Naive thymus-derived CD4-positive, alpha-beta T cell (primary cell): ENCODE measurements at regions of chr6 and their contacts with region 1.

Region 1: GRCh38 chr6:27312146-27312949 is at the start of gene POM121L2:
- DNase-seq: peak in 8 of 9 donors; percentile 26 to 61 (median 56)
- ATAC-seq: peak; percentile 66
- H3K4me3 ChIP-seq: peak within 1 kb of the TSS; percentile 80
- H3K4me3 Mint-ChIP-seq: peak within 1 kb of the TSS; percentile 76 to 86 (median 83)
- H3K27ac ChIP-seq: no peak within 1 kb of the TSS
- H3K27ac Mint-ChIP-seq: peak within 1 kb of the TSS in 2 of 9 donors; percentile 15 to 25
- H3K4me1 ChIP-seq: peaks cover 0 to 6% of the 10 kb centered on the region in 2 donors
- H3K4me1 Mint-ChIP-seq: peaks cover 0 to 13% (median 4%) of the 10 kb centered on the region in 7 donors
- H3K27me3 ChIP-seq: peaks cover 4 to 14% of the 10 kb centered on the region in 2 donors
- H3K27me3 Mint-ChIP-seq: peaks cover 63 to 81% (median 73%) of the 10 kb centered on the region in 5 donors
- total RNA-seq, gene POM121L2: not detected

Region 2: GRCh38 chr6:27126815-27127537 is 185.4 kb before region 1 on chr6:
- CTCF ChIA-PET with region 1: no interaction called
- POLR2A ChIA-PET with region 1: no interaction called
- intact Hi-C with region 1: loop called in 1 of 2 experiments (anchors 1 kb)
- DNase-seq: peak; percentile 46 to 82 (median 77)
- ATAC-seq: peak; percentile 89
- H3K4me3 ChIP-seq: peak overlapping the region; percentile 33
- H3K4me3 Mint-ChIP-seq: peak overlapping the region; percentile 35 to 90 (median 77)
- H3K27ac ChIP-seq: no peak overlapping the region
- H3K27ac Mint-ChIP-seq: peak overlapping the region; percentile 41 to 93 (median 82)
- H3K4me1 ChIP-seq: peaks cover 4 to 6% of the 10 kb centered on the region in 2 donors
- H3K4me1 Mint-ChIP-seq: peaks cover 6 to 51% (median 15%) of the 10 kb centered on the region in 7 donors
- H3K27me3 ChIP-seq: no peaks in the 10 kb centered on the region
- H3K27me3 Mint-ChIP-seq: no peaks in the 10 kb centered on the region

Region 3: GRCh38 chr6:27177485-27178406 is 134.6 kb before region 1 on chr6:
- CTCF ChIA-PET with region 1: interaction called, 3 read pairs
- POLR2A ChIA-PET with region 1: no interaction called
- intact Hi-C with region 1: loop called in 1 of 2 experiments (anchors 1 kb)
- DNase-seq: peak; percentile 49 to 78 (median 66)
- ATAC-seq: peak; percentile 83
- H3K4me3 ChIP-seq: peak overlapping the region; percentile 99
- H3K4me3 Mint-ChIP-seq: peak overlapping the region; percentile 90 to 98 (median 96)
- H3K27ac ChIP-seq: peak overlapping the region; percentile 74
- H3K27ac Mint-ChIP-seq: peak overlapping the region; percentile 79 to 100 (median 95)
- H3K4me1 ChIP-seq: peaks cover 0 to 3% of the 10 kb centered on the region in 2 donors
- H3K4me1 Mint-ChIP-seq: peaks cover 0 to 33% (median 14%) of the 10 kb centered on the region in 7 donors
- H3K27me3 ChIP-seq: no peaks in the 10 kb centered on the region
- H3K27me3 Mint-ChIP-seq: peaks cover 0 to 37% (median 0%) of the 10 kb centered on the region in 5 donors

Region 4: GRCh38 chr6:27332692-27333641 is 20.6 kb after region 1 on chr6:
- CTCF ChIA-PET with region 1: interaction called, 3 read pairs
- POLR2A ChIA-PET with region 1: no interaction called
- intact Hi-C with region 1: loop called in 1 of 2 experiments (anchors 1 kb)
- DNase-seq: peak in 8 of 9 donors; percentile 18 to 79 (median 68)
- ATAC-seq: peak; percentile 74
- H3K4me3 ChIP-seq: peak overlapping the region; percentile 60
- H3K4me3 Mint-ChIP-seq: peak overlapping the region; percentile 67 to 94 (median 87)
- H3K27ac ChIP-seq: no peak overlapping the region
- H3K27ac Mint-ChIP-seq: peak overlapping the region; percentile 0 to 97 (median 84)
- H3K4me1 ChIP-seq: peaks cover 0 to 3% of the 10 kb centered on the region in 2 donors
- H3K4me1 Mint-ChIP-seq: peaks cover 7 to 21% (median 13%) of the 10 kb centered on the region in 7 donors
- H3K27me3 ChIP-seq: peaks cover 0 to 8% of the 10 kb centered on the region in 2 donors
- H3K27me3 Mint-ChIP-seq: peaks cover 21 to 53% (median 25%) of the 10 kb centered on the region in 5 donors

Region 5: DNA sequence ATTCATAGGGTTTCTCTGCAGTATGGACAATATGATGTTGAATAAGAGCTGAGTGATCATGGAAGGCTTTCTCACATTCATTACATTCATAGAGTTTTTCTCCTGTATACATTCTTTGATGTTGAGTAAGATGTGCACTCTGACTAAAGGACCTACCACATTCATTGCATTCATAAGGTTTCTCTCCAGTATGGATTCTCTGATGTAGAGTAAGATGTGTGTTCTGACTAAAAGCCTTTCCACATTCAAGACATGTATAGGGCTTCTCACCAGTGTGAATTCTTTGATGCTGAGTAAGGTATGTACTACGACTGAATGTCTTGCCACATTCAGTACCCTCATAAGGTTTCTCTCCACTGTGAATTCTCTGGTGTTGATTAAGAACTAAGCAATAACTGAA is 46.9 kb after region 1 on chr6:
- CTCF ChIA-PET with region 1: no interaction called
- POLR2A ChIA-PET with region 1: no interaction called
- intact Hi-C with region 1: no loop called
- DNase-seq: no peak
- ATAC-seq: no peak
- H3K4me3 ChIP-seq: no peak overlapping the region
- H3K4me3 Mint-ChIP-seq: no peak overlapping the region
- H3K27ac ChIP-seq: no peak overlapping the region
- H3K27ac Mint-ChIP-seq: no peak overlapping the region
- H3K4me1 ChIP-seq: no peaks in the 10 kb centered on the region
- H3K4me1 Mint-ChIP-seq: no peaks in the 10 kb centered on the region
- H3K27me3 ChIP-seq: no peaks in the 10 kb centered on the region
- H3K27me3 Mint-ChIP-seq: peaks cover 0 to 4% (median 0%) of the 10 kb centered on the region in 5 donors

Region 6: DNA sequence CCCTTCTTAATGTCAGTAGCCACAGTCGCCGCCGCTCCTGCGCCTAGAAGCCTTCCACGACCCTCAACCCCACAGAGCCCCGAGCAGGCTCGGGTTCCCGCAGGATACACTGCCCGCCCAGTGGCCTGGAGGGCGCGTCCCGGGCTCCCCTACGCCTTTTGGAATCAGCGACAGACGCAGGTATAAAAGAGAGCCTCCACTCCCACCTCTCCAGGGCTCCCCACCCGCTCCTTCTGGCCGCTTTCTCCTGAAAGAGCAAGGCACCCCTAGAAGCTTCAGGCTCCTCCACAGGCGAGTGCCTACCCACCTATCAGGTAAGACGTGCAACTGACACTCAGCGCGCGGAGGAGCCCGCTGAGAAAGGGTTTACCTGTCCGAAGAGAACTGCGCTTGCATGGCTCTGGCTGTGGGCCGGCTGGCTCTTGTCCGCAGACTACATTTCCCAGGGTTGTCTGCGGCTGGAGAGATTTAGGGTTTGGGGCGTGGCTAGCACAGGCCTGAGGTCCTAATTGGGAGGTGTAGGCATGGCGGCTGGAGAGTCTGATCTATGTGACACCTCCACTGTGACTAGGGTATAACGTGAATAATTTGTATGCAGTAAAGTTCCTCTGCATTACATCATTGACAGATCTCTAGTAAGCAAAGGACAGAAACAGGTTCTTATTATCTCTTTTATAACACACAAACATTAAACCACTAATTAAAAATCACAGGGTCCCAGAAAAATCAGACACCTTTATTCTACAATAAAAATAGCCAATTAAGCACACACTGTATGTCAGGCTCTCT is 62.7 kb after region 1 on chr6:
- CTCF ChIA-PET with region 1: no interaction called
- POLR2A ChIA-PET with region 1: no interaction called
- intact Hi-C with region 1: loop called in 1 of 2 experiments (anchors 2 kb)
- DNase-seq: peak; percentile 31 to 68 (median 62)
- ATAC-seq: peak; percentile 98
- H3K4me3 ChIP-seq: peak overlapping the region; percentile 81
- H3K4me3 Mint-ChIP-seq: peak overlapping the region; percentile 68 to 94 (median 92)
- H3K27ac ChIP-seq: peak overlapping the region; percentile 68
- H3K27ac Mint-ChIP-seq: peak overlapping the region in 8 of 9 donors; percentile 81 to 93 (median 87)
- H3K4me1 ChIP-seq: peaks cover 13 to 17% of the 10 kb centered on the region in 2 donors
- H3K4me1 Mint-ChIP-seq: peaks cover 16 to 35% (median 28%) of the 10 kb centered on the region in 7 donors
- H3K27me3 ChIP-seq: no peaks in the 10 kb centered on the region
- H3K27me3 Mint-ChIP-seq: peaks cover 0 to 6% (median under 1%) of the 10 kb centered on the region in 5 donors

Region 7: DNA sequence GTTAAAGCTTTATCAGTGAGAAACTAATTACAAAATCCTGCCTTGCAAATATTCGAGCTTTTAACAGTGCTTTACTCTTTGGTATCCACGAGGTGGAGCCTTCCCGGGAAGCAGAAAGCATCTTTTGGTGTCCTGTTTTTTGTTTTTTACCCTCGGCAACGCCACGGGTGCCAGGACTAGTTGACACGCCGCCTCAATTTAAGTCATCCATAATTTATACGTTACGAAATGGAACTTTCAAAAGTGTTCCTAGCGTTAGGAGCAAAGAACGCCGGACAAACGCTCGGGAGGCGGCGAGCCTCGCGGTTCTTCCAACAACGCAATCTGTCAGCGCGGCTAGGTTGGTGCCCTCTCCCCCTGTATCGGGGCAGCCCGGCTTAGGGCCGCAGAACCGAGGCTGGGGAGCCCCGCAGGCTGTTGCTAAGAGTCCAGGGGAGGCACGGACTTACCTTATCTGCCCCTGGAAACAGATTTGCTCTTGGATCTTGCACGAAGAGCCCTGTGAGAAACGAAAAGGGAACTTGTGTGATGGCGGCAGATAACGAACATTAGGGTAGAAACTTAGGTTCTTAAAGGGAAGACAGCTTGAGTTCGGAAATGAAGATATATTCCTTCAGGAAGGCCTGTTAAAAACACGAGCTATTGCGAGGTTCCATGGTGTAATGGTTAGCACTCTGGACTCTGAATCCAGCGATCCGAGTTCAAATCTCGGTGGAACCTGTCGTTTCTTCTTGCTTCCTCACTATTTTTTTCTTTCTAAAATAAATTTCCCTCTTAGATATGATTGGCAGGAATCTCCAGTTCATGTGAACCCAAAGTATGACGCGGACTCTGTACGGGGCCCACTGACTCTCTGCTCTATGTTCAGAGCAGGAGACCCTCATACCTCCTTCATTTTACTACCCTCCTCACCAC is 206.8 kb after region 1 on chr6:
- CTCF ChIA-PET with region 1: interaction called, 3 read pairs
- POLR2A ChIA-PET with region 1: no interaction called
- intact Hi-C with region 1: loop called (anchors 1 kb)
- DNase-seq: peak; percentile 34 to 79 (median 68)
- ATAC-seq: peak; percentile 81
- H3K4me3 ChIP-seq: peak overlapping the region; percentile 96
- H3K4me3 Mint-ChIP-seq: peak overlapping the region; percentile 84 to 97 (median 91)
- H3K27ac ChIP-seq: peak overlapping the region; percentile 67
- H3K27ac Mint-ChIP-seq: peak overlapping the region; percentile 68 to 94 (median 84)
- H3K4me1 ChIP-seq: peaks cover 7 to 11% of the 10 kb centered on the region in 2 donors
- H3K4me1 Mint-ChIP-seq: peaks cover 0 to 31% (median 18%) of the 10 kb centered on the region in 7 donors
- H3K27me3 ChIP-seq: peaks cover 0 to 3% of the 10 kb centered on the region in 2 donors
- H3K27me3 Mint-ChIP-seq: peaks cover 0 to 40% (median 22%) of the 10 kb centered on the region in 5 donors

Region 8: GRCh38 chr6:27608916-27609883 is 296.9 kb after region 1 on chr6:
- CTCF ChIA-PET with region 1: interaction called, 5 read pairs
- POLR2A ChIA-PET with region 1: no interaction called
- intact Hi-C with region 1: loop called (anchors 1 to 5 kb)
- DNase-seq: peak in 2 of 9 donors; percentile 19 to 33
- ATAC-seq: no peak
- H3K4me3 ChIP-seq: no peak overlapping the region
- H3K4me3 Mint-ChIP-seq: no peak overlapping the region
- H3K27ac ChIP-seq: no peak overlapping the region
- H3K27ac Mint-ChIP-seq: no peak overlapping the region
- H3K4me1 ChIP-seq: no peaks in the 10 kb centered on the region
- H3K4me1 Mint-ChIP-seq: peaks cover 0 to 17% (median 9%) of the 10 kb centered on the region in 7 donors
- H3K27me3 ChIP-seq: peaks cover 7 to 11% of the 10 kb centered on the region in 2 donors
- H3K27me3 Mint-ChIP-seq: peaks cover 44 to 73% (median 60%) of the 10 kb centered on the region in 5 donors